CD4-positive, alpha-beta memory T cell (primary cell): ENCODE measurements at regions of chr2 and their contacts with region 1.

Region 1: DNA sequence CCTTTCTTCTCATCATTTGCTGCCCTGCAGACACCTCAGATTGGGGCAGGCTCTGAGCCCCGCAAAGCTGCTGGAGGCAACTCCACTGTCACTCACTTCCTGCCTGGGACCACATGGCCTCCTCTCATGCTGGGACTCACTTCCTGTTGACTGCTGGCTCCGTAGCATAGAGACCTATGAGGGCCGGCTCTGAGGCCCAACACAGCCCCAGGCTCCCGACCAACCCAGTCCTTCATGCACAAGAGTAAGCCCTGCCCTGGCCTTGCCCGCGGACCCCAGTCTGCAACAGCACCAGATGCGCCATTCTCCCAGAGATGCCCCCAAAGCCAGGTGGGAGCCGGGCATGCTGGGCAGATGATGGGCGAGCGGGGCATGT is 55.7 kb downstream of the DNMT3A start:
- DNase-seq: peak; percentile 68 to 83 (median 75)
- H3K4me3 ChIP-seq: peak overlapping the region in 1 of 2 donors; percentile 21
- H3K4me3 Mint-ChIP-seq: peak overlapping the region; percentile 17 to 91 (median 76)
- H3K27ac ChIP-seq: peak overlapping the region; percentile 63
- H3K27ac Mint-ChIP-seq: peak overlapping the region; percentile 85 to 99 (median 97)
- H3K4me1 ChIP-seq: peaks cover 41% of the 10 kb centered on the region
- H3K4me1 Mint-ChIP-seq: peaks cover 18 to 50% (median 30%) of the 10 kb centered on the region in 4 donors
- H3K27me3 ChIP-seq: no peaks in the 10 kb centered on the region
- H3K27me3 Mint-ChIP-seq: no peaks in the 10 kb centered on the region

Region 2: GRCh38 chr2:25252281-25253105 is 33.5 kb before region 1 on chr2:
- CTCF ChIA-PET with region 1: no interaction called
- POLR2A ChIA-PET with region 1: interaction called, 35 read pairs
- intact Hi-C with region 1: loop called (anchors 5 kb)
- DNase-seq: peak in 4 of 5 donors; percentile 45 to 72 (median 48)
- H3K4me3 ChIP-seq: peak overlapping the region in 1 of 2 donors; percentile 56
- H3K4me3 Mint-ChIP-seq: peak overlapping the region; percentile 73 to 86 (median 82)
- H3K27ac ChIP-seq: peak overlapping the region; percentile 59
- H3K27ac Mint-ChIP-seq: peak overlapping the region; percentile 57 to 91 (median 80)
- H3K4me1 ChIP-seq: peaks cover 19% of the 10 kb centered on the region
- H3K4me1 Mint-ChIP-seq: peaks cover 16 to 51% (median 32%) of the 10 kb centered on the region in 4 donors
- H3K27me3 ChIP-seq: no peaks in the 10 kb centered on the region
- H3K27me3 Mint-ChIP-seq: no peaks in the 10 kb centered on the region

Region 3: GRCh38 chr2:25301453-25302352 is 15.7 kb after region 1 on chr2:
- CTCF ChIA-PET with region 1: interaction called, 4 read pairs
- POLR2A ChIA-PET with region 1: interaction called, 77 read pairs
- intact Hi-C with region 1: no loop called
- DNase-seq: peak in 3 of 5 donors; percentile 31 to 83 (median 38)
- H3K4me3 ChIP-seq: no peak overlapping the region
- H3K4me3 Mint-ChIP-seq: peak overlapping the region in 7 of 8 donors; percentile 15 to 74 (median 32)
- H3K27ac ChIP-seq: peak overlapping the region; percentile 41
- H3K27ac Mint-ChIP-seq: peak overlapping the region; percentile 76 to 97 (median 84)
- H3K4me1 ChIP-seq: peaks cover 51% of the 10 kb centered on the region
- H3K4me1 Mint-ChIP-seq: peaks cover 25 to 54% (median 42%) of the 10 kb centered on the region in 4 donors
- H3K27me3 ChIP-seq: no peaks in the 10 kb centered on the region
- H3K27me3 Mint-ChIP-seq: no peaks in the 10 kb centered on the region

Region 4: GRCh38 chr2:25342372-25343186 is 56.6 kb after region 1 on chr2:
- CTCF ChIA-PET with region 1: interaction called, 9 read pairs
- POLR2A ChIA-PET with region 1: interaction called, 16 read pairs
- intact Hi-C with region 1: no loop called
- DNase-seq: peak; percentile 78 to 83 (median 81)
- H3K4me3 ChIP-seq: peak overlapping the region in 1 of 2 donors; percentile 52
- H3K4me3 Mint-ChIP-seq: peak overlapping the region; percentile 66 to 89 (median 82)
- H3K27ac ChIP-seq: no peak overlapping the region
- H3K27ac Mint-ChIP-seq: peak overlapping the region in 3 of 7 donors; percentile 74 to 84 (median 74)
- H3K4me1 ChIP-seq: peaks cover 34% of the 10 kb centered on the region
- H3K4me1 Mint-ChIP-seq: peaks cover 10 to 35% (median 23%) of the 10 kb centered on the region in 4 donors
- H3K27me3 ChIP-seq: no peaks in the 10 kb centered on the region
- H3K27me3 Mint-ChIP-seq: no peaks in the 10 kb centered on the region

Region 5: GRCh38 chr2:26330113-26330549 is 1044.1 kb after region 1 on chr2:
- CTCF ChIA-PET with region 1: no interaction called
- POLR2A ChIA-PET with region 1: no interaction called
- intact Hi-C with region 1: loop called (anchors 5 kb)
- DNase-seq: peak; percentile 71 to 81 (median 73)
- H3K4me3 ChIP-seq: no peak overlapping the region
- H3K4me3 Mint-ChIP-seq: peak overlapping the region in 1 of 8 donors; percentile 60
- H3K27ac ChIP-seq: no peak overlapping the region
- H3K27ac Mint-ChIP-seq: peak overlapping the region in 2 of 7 donors; percentile 24 to 31
- H3K4me1 ChIP-seq: peaks cover 8% of the 10 kb centered on the region
- H3K4me1 Mint-ChIP-seq: peaks cover 6 to 10% (median 8%) of the 10 kb centered on the region in 4 donors
- H3K27me3 ChIP-seq: no peaks in the 10 kb centered on the region
- H3K27me3 Mint-ChIP-seq: no peaks in the 10 kb centered on the region